Posterior vena cava (tissue), 2 donors: ENCODE measurements at regions of chr10 and their contacts with region 1.

Region 1: DNA sequence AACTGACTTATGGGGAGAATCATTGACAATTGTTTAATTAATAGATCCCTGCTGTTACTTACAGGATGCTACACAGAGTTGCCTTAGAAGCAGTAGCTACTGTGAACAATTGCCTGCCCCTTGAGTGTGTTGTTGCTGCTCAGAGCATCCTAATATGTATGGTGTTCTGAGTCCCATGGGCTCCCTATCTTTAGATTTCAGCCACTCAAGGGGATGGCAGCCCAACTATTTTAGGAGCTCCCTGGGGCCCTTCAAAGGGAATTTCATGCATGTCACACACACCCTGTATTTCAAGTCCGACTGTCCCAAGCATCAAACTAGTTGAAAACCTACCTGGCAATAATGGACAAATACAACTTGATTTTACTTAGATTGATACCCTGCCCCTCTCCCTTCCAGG is 111.2 kb downstream of the NOC3L start:
- DNase-seq: no peak

Region 2: DNA sequence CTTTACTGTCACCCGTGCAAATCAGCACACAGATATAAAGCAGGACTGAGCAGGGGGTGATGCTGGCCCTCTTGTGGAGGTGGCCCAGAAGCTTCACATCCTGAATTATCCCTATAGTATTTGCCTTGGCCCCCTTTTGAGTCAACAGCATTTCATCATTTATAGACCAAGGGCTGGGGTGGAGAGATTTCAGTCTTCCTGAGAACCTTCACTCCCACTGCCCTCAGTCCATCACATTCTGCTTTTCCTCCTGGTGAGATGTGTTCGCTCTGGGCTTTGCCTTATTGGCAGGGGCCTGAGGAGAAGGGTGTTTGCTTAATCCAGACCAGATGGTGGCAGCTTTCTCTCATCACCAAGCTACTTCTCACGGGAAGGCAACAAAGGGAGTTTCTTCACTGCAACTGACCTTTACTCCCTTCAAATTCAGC is 63.5 kb after region 1 on chr10:
- intact Hi-C with region 1: loop called in 1 of 2 experiments (anchors 1 kb)
- DNase-seq: no peak

Region 3: DNA sequence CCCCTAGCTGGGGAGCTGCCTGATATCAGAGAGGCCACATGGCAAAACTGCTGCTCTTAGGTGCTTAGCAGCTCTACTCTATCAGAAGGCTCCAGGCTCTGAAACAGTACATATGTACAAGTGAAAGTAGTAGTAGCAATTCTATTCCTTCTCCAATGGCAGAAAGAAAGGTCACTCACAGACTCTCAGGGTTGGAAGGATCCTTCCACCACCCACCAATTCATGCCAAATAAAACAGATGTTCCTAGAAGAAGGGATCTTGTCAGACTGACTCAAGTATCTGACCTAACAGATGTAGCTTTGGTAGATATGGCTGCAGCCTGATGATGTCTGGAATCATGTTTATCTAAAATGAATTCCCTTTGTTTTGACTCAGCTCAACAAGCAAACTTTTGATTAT is 1413.0 kb after region 1 on chr10:
- intact Hi-C with region 1: no loop called
- DNase-seq: no peak